Esophagus squamous epithelium (tissue), 5 donors: ENCODE measurements at regions of chr10 and their contacts with region 1.

Region 1: DNA sequence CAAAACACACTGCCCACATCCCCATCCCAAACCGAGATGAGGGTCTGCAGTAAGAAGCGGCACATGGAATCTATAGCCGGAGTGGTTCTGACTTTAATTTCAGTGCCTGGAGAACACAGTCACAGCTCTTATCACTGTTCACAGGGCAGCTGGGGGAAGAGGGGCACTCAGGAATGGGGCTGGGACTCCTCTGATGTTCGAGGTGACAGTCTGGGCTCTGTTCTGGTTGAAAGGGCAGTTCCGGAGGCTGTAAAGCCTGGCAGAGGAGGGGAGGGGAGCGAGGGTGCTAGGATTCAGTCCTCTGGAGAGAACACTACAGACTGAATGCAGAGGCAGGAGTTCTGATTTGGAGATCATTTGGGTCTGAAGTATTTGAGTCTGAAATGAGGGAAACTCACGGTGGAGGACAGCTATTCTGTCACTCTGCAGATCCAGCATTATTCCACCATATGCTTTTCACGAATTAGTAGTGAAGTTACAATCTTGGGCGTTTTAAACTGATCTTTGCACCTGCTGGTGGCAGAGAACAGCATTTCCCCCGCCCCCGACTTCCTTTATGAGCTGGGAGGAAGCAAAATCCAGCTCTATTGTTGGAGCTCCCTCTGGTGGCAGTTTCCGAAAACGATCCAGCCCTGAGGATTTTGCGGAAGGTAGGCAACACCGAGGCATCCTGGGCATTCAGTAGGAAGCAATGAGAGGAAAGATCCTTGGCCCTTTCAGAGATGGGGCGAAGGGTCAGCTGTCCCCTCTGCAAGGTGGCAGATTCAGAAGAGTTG is 22.7 kb upstream of the KCNK18 start:
- DNase-seq: no peak
- H3K4me3 ChIP-seq: peak overlapping the region; percentile 21 to 64 (median 40)
- H3K27ac ChIP-seq: no peak overlapping the region
- H3K4me1 ChIP-seq: peaks cover 8 to 14% (median 11%) of the 10 kb centered on the region in 3 donors
- H3K27me3 ChIP-seq: peaks cover 7 to 87% (median 9%) of the 10 kb centered on the region in 4 donors
- CTCF ChIP-seq: peak; percentile 68 to 87 (median 81)
- POLR2A ChIP-seq: no peak

Region 2: GRCh38 chr10:116688241-116688711 is 486.4 kb before region 1 on chr10:
- intact Hi-C with region 1: loop called (anchors 10 kb)
- DNase-seq: no peak
- H3K4me3 ChIP-seq: peak overlapping the region in 1 of 4 donors; percentile 15
- H3K27ac ChIP-seq: peak overlapping the region in 2 of 4 donors; percentile 50 to 57
- H3K4me1 ChIP-seq: peaks cover 0 to 42% (median 0%) of the 10 kb centered on the region in 3 donors
- H3K27me3 ChIP-seq: peaks cover 0 to 3% (median 0%) of the 10 kb centered on the region in 4 donors
- CTCF ChIP-seq: no peak
- POLR2A ChIP-seq: no peak

Region 3: DNA sequence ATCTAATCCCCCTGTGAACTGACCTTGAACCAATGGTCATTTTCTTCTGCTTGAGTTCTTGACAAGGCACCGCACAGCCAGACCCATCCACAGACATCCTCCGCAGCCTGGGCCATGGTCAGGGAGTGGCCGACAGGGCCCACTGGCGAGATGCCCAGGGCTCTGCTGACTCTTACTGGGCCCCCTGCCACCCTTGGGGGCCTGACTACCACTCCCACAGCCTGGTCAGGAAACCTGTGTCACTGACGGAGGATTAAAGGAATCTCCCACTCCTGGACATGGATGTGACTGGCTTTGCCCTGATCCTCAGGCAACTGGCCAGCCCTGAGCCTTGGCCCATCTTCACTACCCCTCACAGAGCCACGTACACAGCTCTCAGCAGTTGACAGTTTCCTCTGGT is 375.8 kb before region 1 on chr10:
- intact Hi-C with region 1: loop called (anchors 2 kb)
- DNase-seq: no peak
- H3K4me3 ChIP-seq: no peak overlapping the region
- H3K27ac ChIP-seq: no peak overlapping the region
- H3K4me1 ChIP-seq: no peaks in the 10 kb centered on the region
- H3K27me3 ChIP-seq: peaks cover 0 to 39% (median 0%) of the 10 kb centered on the region in 4 donors
- CTCF ChIP-seq: no peak
- POLR2A ChIP-seq: no peak

Region 4: GRCh38 chr10:117137031-117137910 is 37.4 kb before region 1 on chr10:
- intact Hi-C with region 1: no loop called
- DNase-seq: no peak
- H3K4me3 ChIP-seq: peak overlapping the region; percentile 14 to 62 (median 30)
- H3K27ac ChIP-seq: no peak overlapping the region
- H3K4me1 ChIP-seq: peaks cover 17 to 70% (median 24%) of the 10 kb centered on the region in 3 donors
- H3K27me3 ChIP-seq: peaks cover 31 to 100% (median 53%) of the 10 kb centered on the region in 4 donors
- CTCF ChIP-seq: no peak
- POLR2A ChIP-seq: no peak